ENCODE measurements at regions of chr7 and their contacts with region 1.

Region 1: GRCh38 chr7:48964074-48964473 is 39.7 kb downstream of the CDC14C start:
- DNase-seq: no peak
- H3K4me3 ChIP-seq: no peak overlapping the region
- H3K27ac ChIP-seq: no peak overlapping the region
- H3K27me3 ChIP-seq: no peaks in the 10 kb centered on the region
- CTCF ChIP-seq: no peak

Region 2: DNA sequence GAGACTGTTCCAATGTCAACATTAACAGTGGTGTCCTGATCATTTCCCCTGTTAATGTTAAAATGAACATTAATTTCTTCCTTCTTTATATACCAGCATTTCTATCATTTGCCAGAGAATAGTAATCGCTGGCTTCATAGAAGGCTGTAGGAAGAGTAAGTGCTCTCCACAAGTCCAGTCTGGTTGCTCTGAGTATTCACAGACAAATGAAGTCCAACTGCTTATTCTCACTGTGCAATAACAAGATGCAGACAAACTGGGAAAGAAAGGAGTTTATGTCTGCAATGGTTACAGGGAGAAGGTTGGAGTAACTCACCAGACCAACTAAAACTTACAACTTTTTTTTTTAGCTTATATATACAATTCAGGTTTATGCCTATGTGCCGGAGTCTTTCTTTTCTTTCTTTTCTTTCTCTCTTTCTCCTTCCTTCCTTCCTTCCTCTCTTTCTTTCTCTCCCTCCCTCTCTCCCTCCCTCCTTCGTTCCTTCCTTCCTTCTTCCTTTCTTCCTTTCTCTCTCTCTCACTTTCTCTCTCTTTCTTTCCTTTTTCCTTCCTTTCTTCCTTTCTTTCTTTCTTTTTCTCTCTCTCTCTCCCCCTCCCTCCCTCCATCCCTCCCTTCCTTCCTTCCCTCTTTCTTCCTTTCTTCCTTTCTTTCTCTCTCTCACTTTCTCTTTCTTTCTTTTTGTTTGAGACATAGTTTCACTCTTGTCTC is 20.6 kb before region 1 on chr7:
- intact Hi-C with region 1: loop called in 1 of 2 experiments (anchors 2 kb)
- DNase-seq: no peak
- H3K4me3 ChIP-seq: no peak overlapping the region
- H3K27ac ChIP-seq: no peak overlapping the region
- H3K27me3 ChIP-seq: no peaks in the 10 kb centered on the region
- CTCF ChIP-seq: no peak